Endothelial cell of umbilical vein (primary cell): ENCODE measurements at regions of chr18 and their contacts with region 1.

Region 1: DNA sequence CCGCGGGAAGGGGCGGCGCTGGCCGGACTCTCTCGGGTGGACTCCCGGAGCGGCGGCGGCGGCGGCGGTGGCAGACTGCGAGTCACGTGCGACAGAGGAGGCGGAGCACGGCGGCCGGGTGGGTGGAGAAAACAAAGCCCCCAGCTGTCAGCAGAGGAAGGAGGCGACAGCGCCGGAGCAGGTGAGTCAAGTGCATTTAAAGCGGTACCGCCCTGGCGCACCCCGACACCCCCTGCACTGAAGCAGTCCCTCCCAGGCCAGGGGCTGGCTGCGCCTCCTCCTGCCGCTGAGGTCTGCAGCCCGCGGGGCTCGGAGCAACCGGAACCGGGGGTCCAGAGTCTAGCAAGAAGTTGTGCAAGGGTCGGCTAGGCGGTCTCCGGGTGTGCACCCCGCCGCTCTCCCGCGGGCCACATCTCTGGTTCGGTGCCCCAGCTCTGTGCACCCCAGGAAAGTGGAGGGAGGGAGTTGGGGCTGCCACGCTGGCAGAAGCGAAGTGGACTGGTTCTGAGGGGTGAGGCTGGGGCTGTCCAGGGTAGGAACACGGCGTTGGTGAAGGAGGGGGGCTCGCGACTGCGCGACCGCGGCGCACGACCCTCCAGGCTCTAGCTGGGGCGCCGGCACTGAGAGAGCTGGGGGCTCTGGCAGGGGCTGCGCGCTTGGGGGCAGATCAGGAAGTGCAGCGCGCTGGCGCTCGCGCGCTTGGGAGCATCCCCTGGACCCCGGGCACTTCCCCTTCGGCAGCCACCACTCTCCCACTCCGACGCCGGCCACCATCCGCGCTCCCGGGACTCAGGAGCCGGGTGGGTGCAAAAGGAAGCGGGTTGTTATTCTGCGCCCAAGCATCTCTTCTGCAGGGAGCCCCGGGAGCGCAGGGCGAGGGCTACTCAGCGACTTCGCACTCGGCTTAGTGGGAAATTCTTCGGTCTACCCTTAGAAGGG is 64.0 kb upstream of the MAPRE2 start:
- DNase-seq: peak; percentile 55
- H3K4me3 ChIP-seq: peak overlapping the region; percentile 19 to 82 (median 69)
- H3K27ac ChIP-seq: no peak overlapping the region
- H3K4me1 ChIP-seq: peaks cover 28% of the 10 kb centered on the region
- H3K27me3 ChIP-seq: peaks cover 13 to 26% of the 10 kb centered on the region in 2 experiments
- CTCF ChIP-seq: no peak
- POLR2A ChIP-seq: no peak

Region 2: GRCh38 chr18:34522603-34523002 is 454.6 kb before region 1 on chr18:
- CTCF ChIA-PET with region 1: no interaction called
- POLR2A ChIA-PET with region 1: no interaction called
- dilution Hi-C with region 1: no loop called
- intact Hi-C with region 1: no loop called
- DNase-seq: peak; percentile 32
- H3K4me3 ChIP-seq: no peak overlapping the region
- H3K27ac ChIP-seq: no peak overlapping the region
- H3K4me1 ChIP-seq: peaks cover 13% of the 10 kb centered on the region
- H3K27me3 ChIP-seq: no peaks in the 10 kb centered on the region
- CTCF ChIP-seq: no peak
- POLR2A ChIP-seq: no peak

Region 3: GRCh38 chr18:34592961-34593382 is 384.2 kb before region 1 on chr18:
- CTCF ChIA-PET with region 1: no interaction called
- POLR2A ChIA-PET with region 1: no interaction called
- dilution Hi-C with region 1: no loop called
- intact Hi-C with region 1: loop called (anchors 10 kb)
- DNase-seq: peak; percentile 69
- H3K4me3 ChIP-seq: peak overlapping the region in 2 of 3 experiments; percentile 36 to 43
- H3K27ac ChIP-seq: no peak overlapping the region
- H3K4me1 ChIP-seq: peaks cover 2% of the 10 kb centered on the region
- H3K27me3 ChIP-seq: no peaks in the 10 kb centered on the region
- CTCF ChIP-seq: no peak
- POLR2A ChIP-seq: no peak

Region 4: DNA sequence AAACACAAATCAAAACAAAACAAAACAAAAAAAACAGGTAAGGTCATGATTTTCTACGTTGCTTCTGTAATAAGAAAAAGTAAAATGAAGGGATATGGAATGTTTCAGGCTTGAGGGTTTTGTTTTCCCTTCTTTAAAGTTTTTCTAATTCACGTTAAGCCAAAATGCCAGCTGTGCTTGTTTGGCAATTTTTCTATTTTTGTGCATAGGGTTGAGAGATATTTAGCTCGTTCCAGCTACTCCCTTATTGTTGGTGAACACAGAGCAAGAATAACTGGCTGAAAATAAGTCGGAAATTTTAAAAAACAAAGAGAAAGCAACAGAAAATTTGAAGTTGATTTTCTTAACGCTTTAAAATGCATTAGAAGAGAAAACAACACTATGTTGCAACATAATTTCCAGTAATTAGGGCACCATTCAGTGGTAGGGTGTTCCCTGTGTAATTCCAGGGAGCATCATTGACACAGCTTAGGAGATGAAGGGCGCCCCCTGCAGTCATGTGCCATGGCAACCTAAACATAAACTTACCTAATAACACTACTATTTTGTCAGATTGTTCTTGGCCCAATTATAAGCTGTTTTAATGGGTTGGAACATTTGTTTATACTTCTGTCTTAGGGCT is 167.6 kb before region 1 on chr18:
- CTCF ChIA-PET with region 1: no interaction called
- POLR2A ChIA-PET with region 1: no interaction called
- dilution Hi-C with region 1: no loop called
- intact Hi-C with region 1: loop called (anchors 1 kb)
- DNase-seq: peak; percentile 31
- H3K4me3 ChIP-seq: no peak overlapping the region
- H3K27ac ChIP-seq: no peak overlapping the region
- H3K4me1 ChIP-seq: no peaks in the 10 kb centered on the region
- H3K27me3 ChIP-seq: no peaks in the 10 kb centered on the region
- CTCF ChIP-seq: peak; percentile 36 to 45
- POLR2A ChIP-seq: no peak

Region 5: DNA sequence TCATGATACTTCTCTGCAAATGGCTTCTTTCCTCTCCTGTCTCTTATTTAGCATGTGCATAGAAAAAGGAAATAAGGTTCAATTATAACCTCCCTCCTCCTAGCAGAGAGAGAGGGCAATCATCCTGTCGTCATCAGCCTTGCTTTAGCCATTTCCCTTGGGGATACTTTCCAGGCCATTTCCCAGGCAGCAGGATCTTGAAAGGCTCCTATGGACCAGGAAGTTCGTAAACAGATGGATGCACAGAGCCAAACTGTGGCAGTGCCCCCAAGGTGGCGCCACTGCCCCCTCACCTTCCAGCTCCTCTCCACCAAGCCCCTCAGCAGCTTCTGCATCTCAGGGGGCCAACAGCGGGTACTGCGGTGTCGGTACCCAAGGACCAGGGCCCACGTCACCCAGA is 109.6 kb before region 1 on chr18:
- CTCF ChIA-PET with region 1: interaction called, 3 read pairs
- POLR2A ChIA-PET with region 1: no interaction called
- dilution Hi-C with region 1: no loop called
- intact Hi-C with region 1: loop called (anchors 1 kb)
- DNase-seq: peak; percentile 10
- H3K4me3 ChIP-seq: no peak overlapping the region
- H3K27ac ChIP-seq: no peak overlapping the region
- H3K4me1 ChIP-seq: no peaks in the 10 kb centered on the region
- H3K27me3 ChIP-seq: no peaks in the 10 kb centered on the region
- CTCF ChIP-seq: peak; percentile 15 to 34
- POLR2A ChIP-seq: no peak

Region 6: DNA sequence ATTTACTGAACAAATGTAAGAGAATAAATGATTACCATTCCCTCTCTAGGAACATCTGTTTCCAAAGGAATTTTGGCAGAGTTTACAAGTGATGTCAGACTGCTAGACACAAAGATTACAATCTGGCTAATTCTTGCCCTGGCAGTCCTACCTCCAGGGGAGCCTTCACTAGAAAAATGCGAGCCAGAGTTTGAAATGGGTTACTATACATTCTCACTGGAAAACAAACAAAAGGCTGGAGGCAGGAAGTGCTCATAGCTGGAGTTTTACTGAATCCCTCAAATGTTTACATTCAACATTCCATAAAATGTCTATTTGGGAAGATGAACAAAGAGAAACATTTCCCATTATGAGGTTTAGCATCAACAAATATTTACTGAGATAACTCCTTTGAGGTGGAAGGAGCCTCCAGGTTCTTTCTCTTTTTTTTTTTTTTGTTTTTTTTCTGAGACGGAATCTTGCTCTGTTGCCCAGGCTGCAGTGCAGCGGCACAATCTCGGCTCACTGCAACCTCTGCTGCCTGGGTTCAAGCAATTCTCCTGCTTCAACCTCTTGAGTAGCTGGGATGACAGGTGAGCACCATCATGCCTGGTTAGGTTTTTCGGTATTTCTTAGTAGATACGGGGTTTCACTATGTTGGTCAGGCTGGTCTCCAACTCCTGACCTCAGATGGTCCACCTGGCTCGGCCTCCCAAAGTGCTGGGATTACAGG is 65.0 kb before region 1 on chr18:
- CTCF ChIA-PET with region 1: no interaction called
- POLR2A ChIA-PET with region 1: no interaction called
- dilution Hi-C with region 1: no loop called
- intact Hi-C with region 1: loop called (anchors 1 kb)
- DNase-seq: peak; percentile 51
- H3K4me3 ChIP-seq: no peak overlapping the region
- H3K27ac ChIP-seq: no peak overlapping the region
- H3K4me1 ChIP-seq: peaks cover 3% of the 10 kb centered on the region
- H3K27me3 ChIP-seq: no peaks in the 10 kb centered on the region
- CTCF ChIP-seq: no peak
- POLR2A ChIP-seq: no peak

Region 7: GRCh38 chr18:34956663-34957062 is 20.5 kb before region 1 on chr18:
- CTCF ChIA-PET with region 1: interaction called, 5 read pairs
- POLR2A ChIA-PET with region 1: no interaction called
- dilution Hi-C with region 1: no loop called
- intact Hi-C with region 1: loop called (anchors 1 kb)
- DNase-seq: peak; percentile 78
- H3K4me3 ChIP-seq: peak overlapping the region in 1 of 3 experiments; percentile 51
- H3K27ac ChIP-seq: peak overlapping the region; percentile 95
- H3K4me1 ChIP-seq: peaks cover 23% of the 10 kb centered on the region
- H3K27me3 ChIP-seq: no peaks in the 10 kb centered on the region
- CTCF ChIP-seq: no peak
- POLR2A ChIP-seq: no peak

Region 8: GRCh38 chr18:35040988-35041814 is 64.0 kb after region 1 on chr18 and contains the start of gene MAPRE2:
- CTCF ChIA-PET with region 1: interaction called, 4 read pairs
- POLR2A ChIA-PET with region 1: no interaction called
- dilution Hi-C with region 1: no loop called
- intact Hi-C with region 1: loop called (anchors 2 kb)
- DNase-seq: peak; percentile 99
- H3K4me3 ChIP-seq: peak within 1 kb of the TSS; percentile 88 to 99 (median 89)
- H3K27ac ChIP-seq: peak within 1 kb of the TSS; percentile 80
- H3K4me1 ChIP-seq: peaks cover 61% of the 10 kb centered on the region
- H3K27me3 ChIP-seq: no peaks in the 10 kb centered on the region
- CTCF ChIP-seq: no peak
- POLR2A ChIP-seq: peak; percentile 96
- total RNA-seq, gene MAPRE2: 111 and 117 TPM in 2 replicates